PC-3 (cell line): ENCODE measurements at regions of chr1 and their contacts with region 1.

Region 1: GRCh38 chr1:6245086-6245868 is 1.3 kb downstream of the HES3 start:
- DNase-seq: peak; percentile 96
- ATAC-seq: peak; percentile 48
- H3K4me3 ChIP-seq: peak overlapping the region; percentile 68
- H3K27ac ChIP-seq: no peak overlapping the region
- H3K4me1 ChIP-seq: peaks cover 21% of the 10 kb centered on the region
- H3K27me3 ChIP-seq: peaks cover 23% of the 10 kb centered on the region
- CTCF ChIP-seq: peak; percentile 94

Region 2: GRCh38 chr1:6052543-6053205 is 192.6 kb before region 1 on chr1:
- CTCF ChIA-PET with region 1: interaction called, 9 read pairs
- POLR2A ChIA-PET with region 1: no interaction called
- intact Hi-C with region 1: loop called (anchors 1 kb)
- DNase-seq: peak; percentile 86
- ATAC-seq: peak; percentile 80
- H3K4me3 ChIP-seq: no peak overlapping the region
- H3K27ac ChIP-seq: no peak overlapping the region
- H3K4me1 ChIP-seq: no peaks in the 10 kb centered on the region
- H3K27me3 ChIP-seq: no peaks in the 10 kb centered on the region
- CTCF ChIP-seq: peak; percentile 94

Region 3: DNA sequence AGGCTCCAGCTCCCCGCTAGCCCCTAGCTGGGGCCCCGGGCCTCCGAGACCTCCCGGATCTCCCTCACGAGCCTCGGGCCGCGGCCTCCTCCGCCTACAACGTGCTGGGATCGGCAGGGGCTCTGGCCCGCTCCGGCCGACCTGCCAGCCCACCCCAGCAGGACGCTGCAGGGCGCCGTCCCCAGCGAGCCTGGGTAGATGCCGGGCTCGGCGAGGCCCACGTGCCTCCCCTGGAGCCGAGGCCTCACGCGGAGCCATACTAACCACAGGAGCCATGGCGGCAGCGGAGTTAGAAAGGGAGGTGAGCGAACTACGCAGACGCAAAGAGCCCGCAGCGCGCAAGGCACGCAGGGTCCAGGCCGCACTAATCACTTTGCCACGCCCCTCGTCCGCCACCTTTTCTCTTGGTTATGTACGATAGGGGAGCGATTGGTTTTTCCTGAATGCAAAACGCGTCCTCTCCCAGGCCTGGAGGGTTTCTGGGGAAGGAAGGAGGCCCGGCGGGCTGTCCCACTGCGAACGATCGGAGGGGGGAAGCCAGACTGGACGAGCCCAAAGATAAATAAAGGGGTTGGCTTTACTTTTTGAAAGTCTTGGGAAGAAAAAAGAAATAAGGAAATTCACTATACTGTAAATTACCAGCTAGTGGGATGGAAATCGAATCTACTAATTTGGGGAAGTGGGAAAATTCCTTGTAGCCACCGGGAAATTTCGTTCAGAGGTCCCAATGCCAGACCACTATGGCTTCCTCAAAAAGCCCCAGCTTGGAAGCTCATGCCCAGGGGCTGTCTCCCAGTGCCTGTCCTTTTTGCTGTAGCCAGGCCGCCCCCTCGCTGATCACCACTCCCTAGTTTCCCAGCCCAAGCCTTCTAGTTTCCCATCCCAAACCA is 45.7 kb before region 1 on chr1 and contains the start of gene RPL22:
- CTCF ChIA-PET with region 1: interaction called, 42 read pairs
- POLR2A ChIA-PET with region 1: no interaction called
- intact Hi-C with region 1: no loop called
- DNase-seq: peak; percentile 100
- ATAC-seq: peak; percentile 99
- H3K4me3 ChIP-seq: peak within 1 kb of the TSS; percentile 74
- H3K27ac ChIP-seq: peak within 1 kb of the TSS; percentile 66
- H3K4me1 ChIP-seq: peaks cover 21% of the 10 kb centered on the region
- H3K27me3 ChIP-seq: no peaks in the 10 kb centered on the region
- CTCF ChIP-seq: no peak
- total RNA-seq, gene RPL22: 283 and 297 TPM in 2 replicates

Region 4: DNA sequence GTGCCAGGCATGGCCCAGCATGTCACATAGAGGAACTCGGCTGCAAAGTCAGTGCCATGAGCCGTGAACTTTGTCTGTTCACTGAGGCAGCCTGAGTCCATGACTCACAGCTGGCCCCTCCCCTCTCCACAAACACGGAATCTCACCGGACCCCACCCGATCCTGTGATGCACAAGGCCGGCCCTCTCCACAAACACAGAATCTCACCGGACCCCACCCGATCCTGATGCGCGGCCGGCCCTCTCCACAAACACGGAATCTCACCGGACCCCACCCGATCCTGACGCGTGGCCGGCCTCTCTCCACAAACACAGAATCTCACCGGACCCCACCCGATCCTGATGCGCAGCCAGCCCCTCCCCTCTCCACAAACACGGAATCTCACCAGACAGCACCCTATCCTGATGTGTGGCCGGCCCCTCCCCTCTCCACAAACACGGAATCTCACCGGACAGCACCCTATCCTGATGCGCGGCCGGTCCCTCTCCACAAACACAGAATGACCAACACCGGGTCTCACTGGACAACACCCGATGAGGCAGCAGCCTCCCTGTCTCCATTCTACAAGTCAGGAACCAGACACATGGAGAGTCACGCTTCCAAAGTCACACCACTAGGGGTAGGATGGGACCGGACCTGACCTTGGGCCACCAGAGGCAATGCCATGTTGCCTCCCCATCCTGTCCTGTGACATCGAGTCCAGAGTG is 55.2 kb after region 1 on chr1:
- CTCF ChIA-PET with region 1: interaction called, 5 read pairs
- POLR2A ChIA-PET with region 1: no interaction called
- intact Hi-C with region 1: loop called (anchors 1 kb)
- DNase-seq: peak; percentile 92
- ATAC-seq: peak; percentile 66
- H3K4me3 ChIP-seq: peak overlapping the region; percentile 30
- H3K27ac ChIP-seq: peak overlapping the region; percentile 94
- H3K4me1 ChIP-seq: peaks cover 53% of the 10 kb centered on the region
- H3K27me3 ChIP-seq: no peaks in the 10 kb centered on the region
- CTCF ChIP-seq: peak; percentile 47

Region 5: DNA sequence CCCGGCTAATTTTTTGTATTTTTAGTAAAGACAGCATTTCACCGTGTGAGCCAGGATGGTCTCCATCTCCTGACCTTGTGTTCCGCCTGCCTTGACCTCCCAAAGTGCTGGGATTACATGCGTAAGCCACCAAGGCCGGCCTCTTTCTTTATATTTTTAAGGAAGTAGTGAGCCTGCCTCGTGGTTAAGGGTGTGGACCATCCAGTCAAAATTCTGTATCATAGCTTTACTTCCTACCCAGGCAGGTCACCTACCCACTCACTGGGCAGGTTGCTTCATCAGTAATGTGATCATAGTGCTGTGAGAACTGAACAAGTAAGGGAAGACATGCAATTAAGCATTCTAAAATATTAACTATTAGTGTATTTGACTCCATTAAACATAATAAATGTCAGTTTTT is 156.4 kb after region 1 on chr1:
- CTCF ChIA-PET with region 1: no interaction called
- POLR2A ChIA-PET with region 1: no interaction called
- intact Hi-C with region 1: loop called (anchors 2 kb)
- DNase-seq: peak; percentile 45
- ATAC-seq: peak; percentile 25; the same call in 1 of the 2 replicates
- H3K4me3 ChIP-seq: no peak overlapping the region
- H3K27ac ChIP-seq: no peak overlapping the region
- H3K4me1 ChIP-seq: peaks cover 7% of the 10 kb centered on the region; the same call in 1 of the 2 replicates
- H3K27me3 ChIP-seq: no peaks in the 10 kb centered on the region
- CTCF ChIP-seq: no peak